ENCODE measurements at regions of chr7 and their contacts with region 1.

Region 1: DNA sequence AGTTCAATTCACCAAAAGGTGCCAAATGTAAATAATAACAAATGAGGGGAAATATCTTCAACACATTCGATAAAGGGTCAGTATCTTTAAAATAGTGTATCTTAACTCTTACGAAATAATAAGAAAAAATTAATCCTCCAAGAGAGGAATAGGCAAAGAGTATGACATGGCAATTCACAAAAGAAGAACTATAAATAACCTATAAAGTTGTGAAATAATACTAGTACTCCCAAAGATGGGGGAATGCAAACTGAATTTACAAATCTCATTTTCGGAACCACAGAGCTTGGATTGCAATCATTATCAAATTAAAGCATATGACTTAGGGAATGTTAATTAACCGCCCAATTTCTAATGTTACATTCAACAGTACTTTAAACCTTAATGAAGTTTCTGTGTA is 78.2 kb upstream of the TARP start:
- DNase-seq: no peak
- H3K4me3 ChIP-seq: no peak overlapping the region
- H3K4me1 ChIP-seq: no peaks in the 10 kb centered on the region
- H3K27me3 ChIP-seq: no peaks in the 10 kb centered on the region

Region 2: DNA sequence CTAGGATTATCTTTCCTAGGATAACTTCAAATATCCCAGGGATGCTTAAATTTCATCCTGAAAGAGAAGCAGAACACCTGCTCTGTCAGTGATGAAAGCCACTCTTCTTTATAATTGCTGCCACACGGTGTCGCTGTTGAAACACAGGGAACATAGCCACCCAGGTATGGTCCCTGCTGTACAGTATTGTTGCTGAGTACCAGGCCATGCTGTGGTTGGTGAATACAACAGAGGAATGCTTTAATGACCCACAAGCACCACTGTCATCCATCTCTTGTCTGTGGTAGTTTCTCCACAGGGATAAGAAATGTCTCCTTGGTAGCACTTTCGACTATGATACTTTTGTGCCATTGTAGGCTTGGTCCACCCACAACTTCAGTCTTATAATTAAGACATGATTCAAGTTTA is 244.1 kb before region 1 on chr7:
- in situ Hi-C with region 1: loop called (anchors 5 kb)
- DNase-seq: peak; percentile 52 to 81
- H3K4me3 ChIP-seq: no peak overlapping the region
- H3K4me1 ChIP-seq: no peaks in the 10 kb centered on the region
- H3K27me3 ChIP-seq: peaks cover 13% of the 10 kb centered on the region